Activated CD4-positive, alpha-beta memory T cell treated with anti-CD3 and anti-CD28 coated beads, Interleukin-2, amount 10 ng/mL, durations not matched to agents 7 days and 5 days (primary cell): ENCODE measurements at regions of chr6 and their contacts with region 1.

Region 1: DNA sequence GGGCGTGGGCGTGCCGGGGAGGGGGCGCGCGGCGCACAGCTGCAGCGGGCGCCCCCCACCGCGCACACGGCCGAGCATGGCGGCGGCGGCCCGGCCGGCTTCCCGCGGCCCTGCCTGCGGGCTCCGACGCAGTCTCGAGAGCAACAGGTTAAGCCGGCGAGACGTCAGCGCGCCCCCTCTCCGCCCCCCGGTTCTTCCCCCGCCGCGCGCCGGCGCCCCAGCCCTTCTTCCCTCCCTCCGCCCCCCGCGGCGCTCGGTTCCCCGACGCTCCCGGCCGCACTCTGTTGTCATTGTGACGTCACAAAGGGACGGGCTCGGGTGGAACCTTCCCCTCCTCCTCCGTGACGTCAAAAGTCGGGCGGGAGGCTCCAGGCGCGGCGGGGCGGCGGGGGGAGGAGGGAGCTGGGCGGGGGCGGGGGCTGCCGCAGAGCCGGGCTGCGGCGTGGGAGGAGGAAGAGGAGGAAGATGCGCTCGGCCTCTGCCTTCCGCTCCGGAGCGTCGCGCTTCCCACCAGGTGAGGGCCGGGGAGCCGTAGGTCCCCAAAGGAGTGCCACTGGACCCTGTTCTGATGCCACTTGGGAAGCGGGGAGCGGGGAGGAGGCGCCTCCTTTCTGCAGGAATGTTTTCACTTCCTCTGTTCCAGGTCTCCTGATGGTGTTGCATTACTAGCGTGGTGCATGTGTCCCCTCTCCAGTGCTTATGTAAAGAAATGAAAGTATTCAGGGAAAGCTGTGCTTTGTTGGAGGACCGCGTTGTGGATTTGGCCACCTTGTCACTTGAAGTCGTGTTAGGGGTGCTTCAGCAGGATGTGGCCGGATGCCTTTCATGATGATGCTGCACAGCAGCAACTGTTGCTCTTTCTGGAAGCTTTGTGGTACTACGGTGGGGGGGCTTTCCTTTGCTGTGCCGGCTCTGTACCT is 2.8 kb downstream of the JARID2 start:
- DNase-seq: peak; percentile 97
- H3K4me3 Mint-ChIP-seq: peak overlapping the region; percentile 99
- H3K27ac Mint-ChIP-seq: peak overlapping the region; percentile 100
- H3K4me1 Mint-ChIP-seq: peaks cover 52% of the 10 kb centered on the region
- H3K27me3 Mint-ChIP-seq: no peaks in the 10 kb centered on the region

Region 2: GRCh38 chr6:15299430-15300131 is 50.9 kb after region 1 on chr6:
- CTCF ChIA-PET with region 1: no interaction called
- POLR2A ChIA-PET with region 1: interaction called, 12 read pairs
- DNase-seq: peak; percentile 66
- H3K4me3 Mint-ChIP-seq: peak overlapping the region; percentile 43
- H3K27ac Mint-ChIP-seq: peak overlapping the region; percentile 95
- H3K4me1 Mint-ChIP-seq: peaks cover 73% of the 10 kb centered on the region
- H3K27me3 Mint-ChIP-seq: no peaks in the 10 kb centered on the region

Region 3: GRCh38 chr6:15340775-15341174 is 92.1 kb after region 1 on chr6:
- CTCF ChIA-PET with region 1: no interaction called
- POLR2A ChIA-PET with region 1: no interaction called
- DNase-seq: no peak
- H3K4me3 Mint-ChIP-seq: peak overlapping the region; percentile 34
- H3K27ac Mint-ChIP-seq: peak overlapping the region; percentile 33
- H3K4me1 Mint-ChIP-seq: peaks cover 67% of the 10 kb centered on the region
- H3K27me3 Mint-ChIP-seq: no peaks in the 10 kb centered on the region